ENCODE measurements at regions of chr14 and their contacts with region 1.

Region 1: GRCh38 chr14:99910337-99911309 is 117.4 kb downstream of the EML1 start:
- DNase-seq: peak; percentile 85
- H3K4me3 ChIP-seq: no peak overlapping the region
- H3K27me3 ChIP-seq: no peaks in the 10 kb centered on the region
- CTCF ChIP-seq: no peak

Region 2: GRCh38 chr14:101404426-101405170 is 1494.0 kb after region 1 on chr14:
- CTCF ChIA-PET with region 1: no interaction called
- POLR2A ChIA-PET with region 1: interaction called, 13 read pairs
- DNase-seq: no peak
- H3K4me3 ChIP-seq: no peak overlapping the region
- H3K27me3 ChIP-seq: no peaks in the 10 kb centered on the region
- CTCF ChIP-seq: no peak